Dendritic cell treated with granulocyte-macrophage colony-stimulating factor and Interleukin-4, amounts not matched to agents 40 ng/mL and 50 ng/mL, for 4 days (primary cell): ENCODE measurements at regions of chr16 and their contacts with region 1.

Region 1: DNA sequence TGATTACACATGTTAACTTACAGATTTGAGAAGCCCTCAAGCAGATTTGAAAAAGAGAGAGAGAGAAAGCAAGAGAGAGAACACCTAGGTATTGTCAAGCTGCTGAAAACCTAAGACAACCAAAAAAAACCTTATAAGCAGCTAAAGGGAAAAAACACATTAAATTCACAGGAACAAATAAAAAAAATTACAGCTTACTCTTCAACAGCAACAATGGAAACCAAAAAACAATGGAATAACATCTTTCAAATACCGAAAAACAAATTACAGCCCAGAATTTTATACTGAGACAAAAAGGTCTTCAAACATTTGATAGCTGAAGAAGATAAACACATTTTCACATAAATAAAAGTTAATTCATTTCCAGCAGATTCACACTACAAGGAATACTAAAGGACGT is 8.4 kb upstream of the CFAP20 start:
- H3K4me3 Mint-ChIP-seq: no peak overlapping the region
- H3K27ac Mint-ChIP-seq: no peak overlapping the region
- H3K4me1 Mint-ChIP-seq: no peaks in the 10 kb centered on the region
- H3K27me3 Mint-ChIP-seq: peaks cover 4% of the 10 kb centered on the region

Region 2: GRCh38 chr16:58054289-58054688 is 83.3 kb before region 1 on chr16:
- intact Hi-C with region 1: no loop called
- H3K4me3 Mint-ChIP-seq: no peak overlapping the region
- H3K27ac Mint-ChIP-seq: no peak overlapping the region
- H3K4me1 Mint-ChIP-seq: no peaks in the 10 kb centered on the region
- H3K27me3 Mint-ChIP-seq: peaks cover 1% of the 10 kb centered on the region

Region 3: DNA sequence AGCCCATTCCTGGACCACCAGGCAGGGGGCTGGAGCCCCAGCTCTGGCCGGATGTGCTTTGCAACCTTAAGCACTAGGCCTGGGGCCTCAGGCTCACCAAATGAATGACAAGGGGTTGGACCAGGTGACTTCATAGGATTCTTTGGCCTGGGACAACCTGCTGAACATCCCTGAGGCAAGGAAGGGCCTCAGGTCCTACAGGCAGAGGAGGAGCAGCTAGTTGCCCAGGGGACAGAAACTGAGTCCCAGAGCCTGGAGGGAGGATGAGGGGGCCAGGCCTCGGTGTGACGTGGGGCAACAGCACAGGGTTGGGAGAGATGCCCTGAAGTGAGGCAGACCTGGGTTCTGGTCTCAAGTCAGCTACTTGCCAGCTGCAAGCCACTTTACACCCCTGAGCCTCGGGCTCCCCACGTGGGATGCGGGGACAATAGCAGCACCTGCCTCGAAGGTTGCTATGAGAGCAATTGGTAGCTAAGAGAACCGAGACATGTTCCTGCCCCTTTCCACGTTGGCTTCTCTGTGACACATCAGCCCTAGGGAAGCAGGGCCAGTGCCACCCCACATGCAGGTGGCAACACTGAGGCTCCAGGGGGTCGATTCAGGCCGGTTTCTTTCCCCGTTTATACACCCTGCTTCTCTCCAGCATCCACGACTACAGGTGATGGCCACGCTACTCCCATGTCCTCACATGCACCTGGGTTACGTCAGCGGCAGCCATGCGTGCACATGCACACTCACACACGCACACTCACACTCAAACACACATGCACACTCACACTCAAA is 51.0 kb before region 1 on chr16:
- intact Hi-C with region 1: no loop called
- H3K4me3 Mint-ChIP-seq: no peak overlapping the region
- H3K27ac Mint-ChIP-seq: no peak overlapping the region
- H3K4me1 Mint-ChIP-seq: no peaks in the 10 kb centered on the region
- H3K27me3 Mint-ChIP-seq: no peaks in the 10 kb centered on the region

Region 4: GRCh38 chr16:58152246-58152868 is 14.8 kb after region 1 on chr16:
- intact Hi-C with region 1: no loop called
- H3K4me3 Mint-ChIP-seq: no peak overlapping the region
- H3K27ac Mint-ChIP-seq: no peak overlapping the region
- H3K4me1 Mint-ChIP-seq: no peaks in the 10 kb centered on the region
- H3K27me3 Mint-ChIP-seq: no peaks in the 10 kb centered on the region

Region 5: GRCh38 chr16:58187092-58187491 is 49.5 kb after region 1 on chr16:
- intact Hi-C with region 1: loop called (anchors 5 kb)
- H3K4me3 Mint-ChIP-seq: no peak overlapping the region
- H3K27ac Mint-ChIP-seq: no peak overlapping the region
- H3K4me1 Mint-ChIP-seq: no peaks in the 10 kb centered on the region
- H3K27me3 Mint-ChIP-seq: no peaks in the 10 kb centered on the region

Region 6: GRCh38 chr16:58348986-58349385 is 211.4 kb after region 1 on chr16:
- intact Hi-C with region 1: no loop called
- H3K4me3 Mint-ChIP-seq: no peak overlapping the region
- H3K27ac Mint-ChIP-seq: no peak overlapping the region
- H3K4me1 Mint-ChIP-seq: no peaks in the 10 kb centered on the region
- H3K27me3 Mint-ChIP-seq: peaks cover 30% of the 10 kb centered on the region